ENCODE measurements at regions of chr7 and their contacts with region 1.

Region 1: DNA sequence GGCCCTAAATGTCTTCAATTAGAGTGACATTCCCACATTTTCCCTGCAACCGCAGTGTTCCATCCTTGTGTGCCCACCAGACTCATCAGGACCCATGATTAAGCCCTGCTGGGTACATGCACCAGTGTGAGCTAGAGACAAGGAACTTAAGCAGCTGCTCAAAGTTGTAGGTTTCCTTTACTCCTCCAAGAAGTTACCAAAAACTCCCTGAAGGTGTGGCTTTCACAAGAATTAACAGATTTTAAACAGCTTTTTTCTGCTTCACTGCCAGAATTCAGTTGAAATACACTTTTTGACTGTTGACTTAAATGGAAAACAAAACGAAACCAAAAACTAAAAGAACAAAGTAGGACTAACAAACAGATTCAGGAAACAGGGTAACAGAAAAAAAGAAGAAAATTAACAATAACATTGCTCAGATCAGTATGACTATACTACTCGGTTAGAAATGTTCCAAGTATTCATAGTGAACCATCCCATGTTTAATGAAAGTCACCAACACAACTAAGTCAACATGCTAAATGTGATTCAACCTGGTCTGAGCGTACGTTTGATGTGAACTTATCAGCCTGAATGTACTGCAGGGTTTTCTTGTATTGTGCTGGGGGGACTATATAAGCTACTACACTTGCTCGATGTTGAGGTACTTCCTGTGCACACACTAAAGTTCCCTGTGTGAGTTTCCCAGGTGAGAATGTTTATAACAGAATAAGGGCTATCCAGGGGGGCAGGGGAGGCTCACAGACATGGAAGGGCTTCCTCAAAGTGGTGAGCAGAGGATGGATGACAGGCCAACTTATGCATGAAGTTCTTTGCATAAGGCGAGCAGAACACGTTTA is 22.2 kb downstream of the SLC37A3 start:
- DNase-seq: peak; percentile 48
- ATAC-seq: peak; percentile 92
- H3K4me3 Mint-ChIP-seq: peak overlapping the region; percentile 76
- H3K27ac Mint-ChIP-seq: peak overlapping the region; percentile 92
- H3K4me1 Mint-ChIP-seq: peaks cover 37% of the 10 kb centered on the region
- H3K27me3 Mint-ChIP-seq: no peaks in the 10 kb centered on the region
- CTCF ChIP-seq: no peak

Region 2: GRCh38 chr7:140316165-140316661 is 59.9 kb before region 1 on chr7:
- CTCF ChIA-PET with region 1: no interaction called
- POLR2A ChIA-PET with region 1: no interaction called
- intact Hi-C with region 1: no loop called
- DNase-seq: peak; percentile 36
- ATAC-seq: peak; percentile 85
- H3K4me3 Mint-ChIP-seq: no peak overlapping the region
- H3K27ac Mint-ChIP-seq: no peak overlapping the region
- H3K4me1 Mint-ChIP-seq: peaks cover 22% of the 10 kb centered on the region
- H3K27me3 Mint-ChIP-seq: no peaks in the 10 kb centered on the region
- CTCF ChIP-seq: no peak

Region 3: GRCh38 chr7:140360697-140361229 is 15.3 kb before region 1 on chr7:
- CTCF ChIA-PET with region 1: interaction called, 6 read pairs
- POLR2A ChIA-PET with region 1: interaction called, 13 read pairs
- intact Hi-C with region 1: no loop called
- DNase-seq: peak; percentile 14
- ATAC-seq: peak; percentile 26
- H3K4me3 Mint-ChIP-seq: no peak overlapping the region
- H3K27ac Mint-ChIP-seq: peak overlapping the region; percentile 68
- H3K4me1 Mint-ChIP-seq: peaks cover 25% of the 10 kb centered on the region
- H3K27me3 Mint-ChIP-seq: no peaks in the 10 kb centered on the region
- CTCF ChIP-seq: no peak

Region 4: DNA sequence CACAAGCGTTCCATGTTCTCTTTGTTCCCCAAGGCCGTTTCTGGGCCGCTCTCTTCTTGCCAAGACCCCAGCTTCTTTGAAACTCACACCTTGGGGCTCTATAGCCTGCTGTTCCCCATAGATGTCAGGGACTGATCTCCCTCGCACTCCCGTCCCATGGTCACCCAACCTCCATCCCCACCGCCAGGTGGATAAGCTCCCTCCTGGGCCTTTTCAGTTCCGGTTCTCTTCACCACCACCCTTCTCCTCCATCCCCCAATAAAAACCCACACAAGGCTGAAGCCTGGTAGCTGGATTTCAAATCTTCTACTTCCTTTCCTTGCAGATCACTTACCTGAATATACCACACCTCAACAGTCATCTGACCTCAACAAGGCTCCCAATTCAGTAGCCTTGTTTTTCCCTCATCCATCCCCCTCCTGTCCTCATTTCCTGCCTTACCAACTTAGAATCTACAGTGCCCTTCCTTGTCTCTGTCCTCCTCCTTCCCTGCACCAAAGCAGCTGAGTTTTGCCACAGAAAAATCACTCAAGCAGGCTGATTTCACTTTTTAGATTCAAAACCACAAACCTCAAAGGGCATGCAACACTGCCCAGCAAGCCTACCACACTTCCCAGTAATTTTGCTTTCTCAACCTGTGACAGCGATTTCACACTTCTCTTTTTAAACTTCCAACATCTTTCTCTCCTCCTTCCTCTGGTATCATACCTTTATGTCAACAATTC is 14.5 kb after region 1 on chr7:
- CTCF ChIA-PET with region 1: interaction called, 4 read pairs
- POLR2A ChIA-PET with region 1: interaction called, 34 read pairs
- intact Hi-C with region 1: no loop called
- DNase-seq: peak; percentile 45
- ATAC-seq: peak; percentile 32
- H3K4me3 Mint-ChIP-seq: no peak overlapping the region
- H3K27ac Mint-ChIP-seq: no peak overlapping the region
- H3K4me1 Mint-ChIP-seq: peaks cover 3% of the 10 kb centered on the region
- H3K27me3 Mint-ChIP-seq: no peaks in the 10 kb centered on the region
- CTCF ChIP-seq: no peak

Region 5: GRCh38 chr7:140397784-140398750 is 22.0 kb after region 1 on chr7 and contains the start of gene SLC37A3:
- CTCF ChIA-PET with region 1: interaction called, 7 read pairs
- POLR2A ChIA-PET with region 1: interaction called, 12 read pairs
- intact Hi-C with region 1: no loop called
- DNase-seq: peak; percentile 90
- ATAC-seq: peak; percentile 89
- H3K4me3 Mint-ChIP-seq: peak within 1 kb of the TSS; percentile 88
- H3K27ac Mint-ChIP-seq: peak within 1 kb of the TSS; percentile 91
- H3K4me1 Mint-ChIP-seq: peaks cover 24% of the 10 kb centered on the region
- H3K27me3 Mint-ChIP-seq: no peaks in the 10 kb centered on the region
- CTCF ChIP-seq: no peak
- total RNA-seq, gene SLC37A3: 30.7 to 33.6 TPM

Region 6: DNA sequence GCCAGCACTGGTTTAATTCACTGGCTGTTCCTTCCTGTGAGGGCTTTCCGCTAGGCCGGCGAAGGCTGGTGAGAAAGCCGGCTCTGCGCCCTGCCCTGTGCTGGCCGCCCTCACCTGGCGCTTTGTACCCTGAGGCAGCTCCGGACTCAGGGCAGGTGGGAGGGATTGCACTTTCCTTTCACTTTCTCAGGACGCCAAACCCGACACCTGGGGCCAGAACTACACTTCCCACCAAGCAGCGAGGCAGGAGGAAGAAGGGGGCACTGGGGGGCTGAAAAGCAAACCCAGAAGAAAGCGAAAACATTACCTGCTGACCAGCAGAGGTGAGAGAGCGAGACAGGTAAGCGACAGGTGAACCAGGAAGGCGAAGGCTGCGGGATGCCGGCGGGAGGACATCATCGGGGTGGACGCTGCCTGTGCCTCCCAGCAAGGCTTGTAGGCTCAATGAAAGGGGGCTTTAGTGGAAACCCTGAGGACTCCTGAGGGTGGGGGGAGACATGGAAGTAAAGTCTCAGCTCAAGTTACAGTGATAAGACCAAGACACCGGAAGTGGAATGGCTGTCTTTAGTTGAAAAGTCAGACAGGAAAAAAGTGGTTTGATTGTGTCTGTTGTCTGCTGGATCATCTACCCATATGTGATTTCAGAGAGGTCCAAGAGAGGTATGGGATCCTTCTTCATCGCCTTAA is 27.9 kb after region 1 on chr7 and contains the start of gene RAB19:
- CTCF ChIA-PET with region 1: interaction called, 3 read pairs
- POLR2A ChIA-PET with region 1: interaction called, 12 read pairs
- intact Hi-C with region 1: no loop called
- DNase-seq: peak; percentile 66
- ATAC-seq: peak; percentile 81
- H3K4me3 Mint-ChIP-seq: peak within 1 kb of the TSS; percentile 85
- H3K27ac Mint-ChIP-seq: peak within 1 kb of the TSS; percentile 93
- H3K4me1 Mint-ChIP-seq: peaks cover 30% of the 10 kb centered on the region
- H3K27me3 Mint-ChIP-seq: no peaks in the 10 kb centered on the region
- CTCF ChIP-seq: no peak
- total RNA-seq, gene RAB19: 5.6 to 6.4 TPM

Region 7: GRCh38 chr7:141585592-141586510 is 1209.7 kb after region 1 on chr7:
- CTCF ChIA-PET with region 1: no interaction called
- POLR2A ChIA-PET with region 1: no interaction called
- intact Hi-C with region 1: no loop called
- DNase-seq: peak; percentile 89
- ATAC-seq: peak; percentile 83
- H3K4me3 Mint-ChIP-seq: peak overlapping the region; percentile 40
- H3K27ac Mint-ChIP-seq: peak overlapping the region; percentile 85
- H3K4me1 Mint-ChIP-seq: peaks cover 71% of the 10 kb centered on the region
- H3K27me3 Mint-ChIP-seq: no peaks in the 10 kb centered on the region
- CTCF ChIP-seq: no peak